A549 (cell line): ENCODE measurements at regions of chr13 and their contacts with region 1.

Region 1: GRCh38 chr13:108508263-108508662 is 121.1 kb upstream of the MYO16 start:
- DNase-seq: peak; percentile 10 to 26
- ATAC-seq: peak; percentile 49 to 56; a peak in 1 of 6 replicates
- H3K4me3 ChIP-seq: no peak overlapping the region
- H3K27ac ChIP-seq: no peak overlapping the region
- H3K4me1 ChIP-seq: no peaks in the 10 kb centered on the region
- CTCF ChIP-seq: peak; percentile 48
- EP300 ChIP-seq: no peak
- POLR2A ChIP-seq: no peak
- RAD21 ChIP-seq: peak; percentile 50 to 63

Region 2: DNA sequence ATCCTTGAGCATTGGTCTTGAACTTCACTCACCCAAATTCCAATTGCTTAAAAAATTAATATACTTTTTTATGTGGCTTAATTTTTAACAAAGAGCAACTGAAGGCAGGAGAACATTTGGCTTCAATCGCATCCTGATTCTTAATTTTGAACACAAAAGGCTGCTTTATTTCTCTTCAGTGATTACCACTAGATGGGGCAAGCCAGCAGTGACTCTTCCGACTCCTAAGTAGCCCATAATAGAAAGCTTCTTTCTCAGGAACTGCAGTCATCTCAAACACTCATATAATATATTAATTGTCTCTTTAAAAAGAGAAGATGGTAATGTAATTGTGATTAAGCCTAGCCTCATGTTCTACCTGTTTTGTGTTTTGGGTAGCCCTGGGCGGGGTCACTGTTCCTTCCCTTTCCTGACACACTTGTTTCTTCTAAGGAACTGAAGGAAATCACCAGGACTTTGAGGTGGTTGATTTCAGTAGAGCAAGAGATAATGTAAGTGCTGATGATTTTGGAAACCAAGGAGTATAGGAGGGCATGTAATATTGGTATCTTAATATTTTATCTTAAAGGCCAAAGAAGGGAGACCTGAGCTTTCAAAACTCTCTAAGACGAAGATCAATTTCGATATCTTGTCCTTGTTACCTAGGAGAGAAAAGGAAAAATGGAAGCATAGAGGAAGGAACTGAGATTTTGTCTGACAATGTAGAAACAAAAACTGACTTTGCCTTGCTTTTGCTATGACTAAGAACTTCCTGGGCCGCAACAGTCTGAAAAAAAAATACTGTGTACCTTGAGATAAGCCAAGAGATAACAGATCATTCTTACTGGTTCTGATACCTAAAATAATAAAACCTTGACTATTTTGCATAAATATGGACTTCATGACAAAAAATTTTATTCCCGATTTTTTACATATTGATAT is 165.6 kb before region 1 on chr13:
- CTCF ChIA-PET with region 1: interaction called, 16 read pairs
- POLR2A ChIA-PET with region 1: no interaction called
- DNase-seq: peak; percentile 4 to 19
- ATAC-seq: peak in 1 of 2 experiments; percentile 41; a peak in 1 of 6 replicates
- H3K4me3 ChIP-seq: no peak overlapping the region
- H3K27ac ChIP-seq: no peak overlapping the region
- H3K4me1 ChIP-seq: no peaks in the 10 kb centered on the region
- CTCF ChIP-seq: peak; percentile 57
- EP300 ChIP-seq: no peak
- POLR2A ChIP-seq: no peak
- RAD21 ChIP-seq: peak; percentile 66 to 68

Region 3: GRCh38 chr13:108708921-108709320 is 200.7 kb after region 1 on chr13:
- CTCF ChIA-PET with region 1: no interaction called
- POLR2A ChIA-PET with region 1: no interaction called
- DNase-seq: no peak
- ATAC-seq: no peak
- H3K4me3 ChIP-seq: no peak overlapping the region
- H3K27ac ChIP-seq: no peak overlapping the region
- H3K4me1 ChIP-seq: peaks cover 15% of the 10 kb centered on the region; the same call in 2 of the 3 replicates
- CTCF ChIP-seq: no peak
- EP300 ChIP-seq: no peak
- POLR2A ChIP-seq: no peak
- RAD21 ChIP-seq: no peak